ENCODE measurements at regions of chr13 and their contacts with region 1.

Region 1: DNA sequence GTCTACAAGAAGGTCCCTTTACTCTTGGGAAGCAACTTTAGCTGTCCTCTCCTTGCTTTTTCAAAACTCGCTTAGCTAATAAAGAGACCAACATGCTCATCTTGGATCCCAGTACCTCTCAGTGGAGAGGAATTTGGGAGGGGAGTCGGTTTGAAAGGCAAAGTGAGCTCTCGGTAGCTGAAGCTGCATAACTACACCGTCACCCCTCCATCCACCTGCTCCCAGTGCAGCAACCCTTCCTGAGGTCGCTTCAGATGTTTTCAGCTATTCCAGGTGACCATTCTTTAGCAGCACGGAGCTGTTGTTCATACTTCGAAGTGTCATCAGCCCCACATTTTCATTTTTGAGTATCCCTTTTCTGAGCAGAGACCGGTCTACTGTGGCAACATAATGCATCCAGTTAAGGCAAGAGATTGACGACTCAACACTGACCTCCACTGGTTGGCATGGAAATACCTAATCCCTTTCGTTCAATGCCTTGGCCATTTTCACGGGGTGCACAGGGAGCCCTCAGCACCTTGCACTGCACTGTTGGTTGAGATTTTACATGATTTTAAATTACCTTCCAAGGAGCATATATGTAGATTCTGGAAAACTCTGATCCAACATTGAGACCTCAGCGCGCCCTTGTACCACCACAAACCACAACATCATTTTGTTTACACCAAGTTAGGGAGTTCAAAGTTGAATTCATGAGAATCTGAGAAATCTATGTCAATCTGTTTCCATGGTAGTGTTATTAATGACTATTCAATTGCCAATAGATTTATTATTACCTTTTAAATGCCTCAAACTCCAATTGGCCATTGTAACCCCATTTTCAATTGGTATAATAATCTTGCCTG is 42.2 kb downstream of the DLEU7 start:
- DNase-seq: peak in 1 of 2 donors; percentile 82
- ATAC-seq: peak; percentile 89 to 95 (median 93)
- H3K4me3 ChIP-seq: peak overlapping the region in 2 of 10 donors; percentile 21 to 22
- H3K27ac ChIP-seq: peak overlapping the region in 9 of 10 donors; percentile 4 to 63 (median 38)
- H3K4me1 ChIP-seq: peaks cover 3 to 41% (median 25%) of the 10 kb centered on the region in 9 donors
- H3K27me3 ChIP-seq: no peaks in the 10 kb centered on the region
- CTCF ChIP-seq: peak; percentile 56 to 87 (median 80)

Region 2: DNA sequence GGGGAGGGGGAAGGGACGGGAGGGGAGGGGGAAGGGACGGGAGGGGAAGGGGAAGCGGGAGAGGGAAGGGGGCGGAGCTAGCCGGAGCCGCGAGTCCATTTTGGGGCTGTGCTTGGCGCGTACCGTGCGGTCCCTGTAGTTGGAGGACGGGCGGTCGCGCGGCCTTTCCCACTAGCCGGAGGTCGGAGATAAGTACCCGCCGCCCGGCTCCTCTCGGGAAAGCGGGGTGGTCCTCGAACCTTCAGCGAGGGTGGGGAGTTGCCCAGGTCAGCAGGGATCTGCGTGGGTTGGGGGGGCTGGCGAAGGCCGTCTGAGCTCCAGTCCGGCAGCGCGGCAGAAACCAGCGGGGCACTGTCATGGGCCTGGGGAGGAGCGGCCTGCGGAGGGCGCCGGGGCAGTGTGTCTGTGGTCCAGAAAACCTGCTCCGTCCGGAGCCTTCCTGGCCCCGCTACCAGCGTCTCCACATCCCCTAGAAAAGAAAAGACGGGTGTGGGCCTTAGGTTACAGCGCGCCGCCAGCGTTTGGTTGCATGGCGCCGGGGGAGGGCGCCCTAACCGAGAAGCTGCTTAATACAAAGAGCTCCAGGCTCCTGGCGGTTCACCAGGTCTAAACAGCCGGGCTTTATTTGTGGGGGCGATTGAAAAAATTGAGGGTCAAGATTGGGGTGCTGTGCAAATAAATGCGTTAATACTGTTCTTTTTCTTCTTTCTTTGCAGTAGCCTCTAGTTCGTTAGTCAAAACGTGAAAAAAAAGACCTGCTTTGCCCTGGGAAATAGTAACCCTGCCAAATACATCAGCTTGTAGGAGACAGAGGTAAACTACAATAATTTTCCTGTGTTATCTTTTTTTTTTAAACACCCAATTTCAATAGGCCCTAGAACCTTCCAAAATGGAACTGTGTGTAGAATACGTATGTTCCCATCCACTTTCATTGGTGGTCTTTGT is 804.1 kb before region 1 on chr13 and contains the start of gene TRIM13:
- intact Hi-C with region 1: loop called in 2 of 10 experiments (anchors 2 to 5 kb)
- DNase-seq: peak; percentile 91
- ATAC-seq: peak; percentile 87 to 95 (median 93)
- H3K4me3 ChIP-seq: peak within 1 kb of the TSS; percentile 61 to 99 (median 91)
- H3K27ac ChIP-seq: peak within 1 kb of the TSS; percentile 93 to 100 (median 99)
- H3K4me1 ChIP-seq: peaks cover 11 to 58% (median 48%) of the 10 kb centered on the region in 9 donors
- H3K27me3 ChIP-seq: no peaks in the 10 kb centered on the region
- CTCF ChIP-seq: peak; percentile 35 to 94 (median 80)
- total RNA-seq, gene TRIM13: 16.0 to 26.9 (median 19.1) TPM

Region 3: DNA sequence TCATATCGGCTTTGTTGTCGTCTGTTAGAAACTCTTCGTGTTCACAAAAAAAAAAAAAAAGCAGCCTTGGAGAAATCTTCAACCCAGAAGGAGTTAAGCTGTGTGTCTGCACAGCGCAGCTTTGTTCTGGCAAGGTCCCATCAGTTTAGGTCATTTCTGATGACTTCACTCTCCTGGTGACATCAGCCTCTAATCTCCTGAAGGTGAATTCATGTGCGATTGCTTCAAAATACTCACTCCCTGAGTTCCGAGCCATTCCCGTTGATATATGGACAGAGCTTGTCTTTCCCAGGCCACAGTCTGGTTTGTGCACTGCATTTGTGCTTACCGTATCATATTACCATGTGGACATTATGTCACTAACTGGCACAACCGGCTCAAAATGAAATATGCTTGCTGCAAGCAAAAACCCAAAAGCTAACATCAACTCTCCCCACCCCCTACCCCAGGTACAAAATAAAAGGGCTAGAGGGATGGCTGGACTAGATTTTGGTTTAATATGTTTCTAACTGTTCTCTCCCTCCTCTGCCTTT is 443.7 kb before region 1 on chr13:
- intact Hi-C with region 1: loop called in 1 of 10 experiments (anchors 10 kb)
- DNase-seq: peak in 1 of 2 donors; percentile 54
- ATAC-seq: peak; percentile 67 to 90 (median 78)
- H3K4me3 ChIP-seq: no peak overlapping the region
- H3K27ac ChIP-seq: peak overlapping the region in 7 of 10 donors; percentile 21 to 61 (median 44)
- H3K4me1 ChIP-seq: peaks cover 0 to 36% (median 20%) of the 10 kb centered on the region in 9 donors
- H3K27me3 ChIP-seq: no peaks in the 10 kb centered on the region
- CTCF ChIP-seq: no peak

Region 4: DNA sequence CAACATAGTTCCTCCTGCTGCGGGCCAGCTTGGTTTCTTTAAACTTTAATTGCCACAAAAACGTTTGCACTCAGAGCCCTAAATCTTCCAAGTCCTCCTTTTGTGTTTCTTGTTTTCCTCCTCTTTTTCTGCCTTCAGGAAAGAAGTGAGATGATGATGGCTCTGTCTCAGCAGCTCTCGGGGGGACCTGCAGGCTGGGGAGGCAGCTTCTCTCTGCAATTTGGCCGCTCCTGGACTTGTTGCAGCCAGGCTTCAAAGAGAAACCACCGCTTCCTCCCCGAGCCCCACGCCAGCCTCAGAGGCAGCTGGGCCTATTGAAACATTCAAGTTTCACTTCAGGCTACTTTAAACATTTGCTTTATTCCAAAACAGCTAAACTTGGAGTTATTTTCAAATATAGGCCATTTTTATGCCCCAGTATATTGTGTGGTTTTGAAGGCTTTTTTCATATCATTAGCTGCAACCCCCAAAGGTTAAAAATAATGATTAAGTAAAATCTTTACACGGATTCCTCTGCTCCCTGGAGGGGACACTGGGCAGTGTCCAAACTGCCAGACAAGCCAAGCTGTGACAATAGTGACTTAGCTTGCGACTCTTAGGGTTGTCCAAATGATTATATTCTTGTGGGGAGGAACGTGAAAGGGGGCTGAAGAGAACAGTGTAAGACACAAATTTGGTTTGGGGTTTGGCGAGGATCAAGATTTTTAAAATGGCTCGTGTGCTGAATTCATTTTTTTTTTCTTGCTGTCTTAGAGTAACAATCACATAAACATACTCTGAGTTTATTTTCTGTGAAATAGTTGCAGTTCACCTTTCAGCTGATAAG is 288.6 kb before region 1 on chr13:
- intact Hi-C with region 1: loop called in 1 of 10 experiments (anchors 10 kb)
- DNase-seq: peak; percentile 65 to 67
- ATAC-seq: peak; percentile 84 to 95 (median 92)
- H3K4me3 ChIP-seq: peak overlapping the region in 9 of 10 donors; percentile 2 to 42 (median 40)
- H3K27ac ChIP-seq: peak overlapping the region; percentile 59 to 90 (median 82)
- H3K4me1 ChIP-seq: peaks cover 0 to 38% (median 22%) of the 10 kb centered on the region in 9 donors
- H3K27me3 ChIP-seq: no peaks in the 10 kb centered on the region
- CTCF ChIP-seq: peak in 5 of 9 donors; percentile 11 to 46 (median 38)

Region 5: DNA sequence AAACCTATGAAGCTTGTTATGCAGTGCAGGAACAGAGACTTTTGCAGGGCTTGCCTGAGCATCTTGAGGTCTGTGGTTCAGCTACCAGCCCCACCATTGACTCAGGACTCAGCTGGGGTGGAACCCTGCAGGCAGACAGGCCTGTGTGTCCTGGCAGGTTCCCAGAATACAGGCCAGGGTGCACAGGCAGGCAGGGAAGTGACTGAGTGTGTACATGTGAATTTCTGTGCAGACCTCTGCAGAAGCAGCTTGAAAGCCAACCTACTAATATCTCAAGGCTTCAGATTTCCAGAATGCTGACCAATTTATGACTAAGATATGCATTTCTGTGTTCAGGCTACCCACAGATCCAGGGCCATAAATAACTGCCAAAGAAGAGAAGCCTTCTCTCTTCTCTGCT is 212.2 kb before region 1 on chr13:
- intact Hi-C with region 1: loop called in 1 of 10 experiments (anchors 5 kb)
- DNase-seq: no peak
- ATAC-seq: peak in 3 of 8 donors; percentile 36 to 52 (median 45)
- H3K4me3 ChIP-seq: no peak overlapping the region
- H3K27ac ChIP-seq: no peak overlapping the region
- H3K4me1 ChIP-seq: peaks cover 0 to 41% (median 14%) of the 10 kb centered on the region in 9 donors
- H3K27me3 ChIP-seq: no peaks in the 10 kb centered on the region
- CTCF ChIP-seq: no peak

Region 6: DNA sequence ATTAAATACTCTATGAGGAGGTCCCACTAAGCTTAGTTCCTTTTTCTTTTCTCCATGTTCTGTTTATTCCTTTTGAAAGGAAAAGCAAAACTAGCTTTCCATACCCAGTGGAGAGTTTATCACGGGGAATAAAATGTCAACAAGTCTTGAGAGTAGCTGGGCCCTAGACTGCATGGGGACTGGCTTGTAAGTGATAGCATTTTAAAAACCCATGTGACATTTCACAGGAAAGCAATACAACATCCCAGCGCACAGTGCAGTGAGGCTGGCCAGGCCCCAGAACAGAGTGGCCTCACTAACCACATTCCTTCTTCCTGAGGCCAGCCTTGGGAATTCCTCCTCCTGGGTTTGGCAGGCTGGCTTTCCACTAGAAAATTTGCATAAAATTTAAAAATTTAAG is 107.6 kb before region 1 on chr13:
- intact Hi-C with region 1: loop called in 2 of 10 experiments (anchors 5 kb)
- DNase-seq: peak; percentile 62 to 64
- ATAC-seq: peak; percentile 87 to 96 (median 93)
- H3K4me3 ChIP-seq: peak overlapping the region in 1 of 10 donors; percentile 11
- H3K27ac ChIP-seq: peak overlapping the region; percentile 55 to 91 (median 68)
- H3K4me1 ChIP-seq: peaks cover 8 to 68% (median 58%) of the 10 kb centered on the region in 9 donors
- H3K27me3 ChIP-seq: no peaks in the 10 kb centered on the region
- CTCF ChIP-seq: no peak

Region 7: GRCh38 chr13:50760751-50761150 is 40.6 kb before region 1 on chr13:
- intact Hi-C with region 1: no loop called
- DNase-seq: no peak
- ATAC-seq: no peak
- H3K4me3 ChIP-seq: no peak overlapping the region
- H3K27ac ChIP-seq: no peak overlapping the region
- H3K4me1 ChIP-seq: no peaks in the 10 kb centered on the region
- H3K27me3 ChIP-seq: no peaks in the 10 kb centered on the region
- CTCF ChIP-seq: no peak